Endothelial cell of umbilical vein (primary cell): ENCODE measurements at regions of chr2 and their contacts with region 1.

Region 1: GRCh38 chr2:100818606-100819369 is 1.2 kb upstream of the NPAS2 start:
- DNase-seq: peak; percentile 90
- H3K4me3 ChIP-seq: peak overlapping the region; percentile 61 to 87 (median 63)
- H3K27ac ChIP-seq: peak overlapping the region; percentile 85
- H3K4me1 ChIP-seq: peaks cover 49% of the 10 kb centered on the region
- H3K27me3 ChIP-seq: no peaks in the 10 kb centered on the region
- CTCF ChIP-seq: peak; percentile 44 to 51
- POLR2A ChIP-seq: no peak

Region 2: DNA sequence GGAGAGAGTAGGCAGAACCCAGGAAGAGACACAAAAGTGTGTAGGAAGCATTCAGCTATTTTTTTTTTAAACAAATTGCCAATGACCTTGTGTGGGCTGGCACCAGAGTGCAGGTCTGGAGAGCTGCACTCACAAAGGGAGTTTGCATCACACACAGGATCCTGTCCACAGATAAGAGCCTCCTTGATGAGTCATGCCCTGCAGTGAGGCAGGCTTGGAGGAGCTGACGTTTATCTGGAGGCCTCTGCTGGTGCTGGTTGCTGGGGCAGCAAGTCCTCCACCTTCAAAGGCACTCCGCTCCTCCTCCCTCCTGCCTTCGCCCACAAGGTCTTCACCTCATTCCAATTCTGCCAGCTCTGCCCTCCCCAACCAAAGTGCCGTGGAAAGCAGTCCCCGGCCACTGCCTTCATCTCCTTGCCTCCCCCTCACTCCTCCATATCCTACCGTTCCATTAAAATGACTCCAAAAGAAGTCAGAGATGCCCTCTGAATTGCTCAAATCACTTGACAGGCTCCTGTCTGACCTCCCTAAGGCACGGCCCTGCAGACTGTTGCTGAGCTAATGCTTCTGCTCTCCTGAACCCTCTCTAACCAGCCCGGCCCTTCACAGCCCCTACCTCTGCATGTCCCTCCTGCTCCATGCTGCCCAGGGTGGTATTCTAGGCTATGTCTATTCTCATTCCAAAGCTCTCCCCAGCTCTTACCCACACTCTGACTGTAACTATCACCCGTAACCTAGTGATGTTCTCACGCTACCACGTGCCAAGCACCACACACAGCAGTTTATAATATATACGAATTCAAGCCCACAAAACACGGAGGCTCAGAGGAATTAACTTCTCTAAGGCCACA is 527.4 kb before region 1 on chr2:
- CTCF ChIA-PET with region 1: no interaction called
- POLR2A ChIA-PET with region 1: no interaction called
- dilution Hi-C with region 1: no loop called
- intact Hi-C with region 1: no loop called
- DNase-seq: peak; percentile 77
- H3K4me3 ChIP-seq: no peak overlapping the region
- H3K27ac ChIP-seq: no peak overlapping the region
- H3K4me1 ChIP-seq: peaks cover 6% of the 10 kb centered on the region
- H3K27me3 ChIP-seq: peaks cover 4 to 7% of the 10 kb centered on the region in 2 experiments
- CTCF ChIP-seq: no peak
- POLR2A ChIP-seq: no peak

Region 3: GRCh38 chr2:100767224-100767653 is 51.5 kb before region 1 on chr2:
- CTCF ChIA-PET with region 1: interaction called, 7 read pairs
- POLR2A ChIA-PET with region 1: no interaction called
- dilution Hi-C with region 1: no loop called
- intact Hi-C with region 1: loop called (anchors 2 kb)
- DNase-seq: peak; percentile 86
- H3K4me3 ChIP-seq: no peak overlapping the region
- H3K27ac ChIP-seq: peak overlapping the region; percentile 63
- H3K4me1 ChIP-seq: peaks cover 25% of the 10 kb centered on the region
- H3K27me3 ChIP-seq: no peaks in the 10 kb centered on the region
- CTCF ChIP-seq: no peak
- POLR2A ChIP-seq: no peak

Region 4: GRCh38 chr2:100878000-100878791 is 59.4 kb after region 1 on chr2:
- CTCF ChIA-PET with region 1: interaction called, 7 read pairs
- POLR2A ChIA-PET with region 1: no interaction called
- dilution Hi-C with region 1: no loop called
- intact Hi-C with region 1: loop called (anchors 1 kb)
- DNase-seq: peak; percentile 32
- H3K4me3 ChIP-seq: no peak overlapping the region
- H3K27ac ChIP-seq: peak overlapping the region; percentile 90
- H3K4me1 ChIP-seq: peaks cover 69% of the 10 kb centered on the region
- H3K27me3 ChIP-seq: no peaks in the 10 kb centered on the region
- CTCF ChIP-seq: no peak
- POLR2A ChIP-seq: no peak

Region 5: GRCh38 chr2:100924520-100925451 is 106.0 kb after region 1 on chr2:
- CTCF ChIA-PET with region 1: interaction called, 4 read pairs
- POLR2A ChIA-PET with region 1: interaction called, 4 read pairs
- dilution Hi-C with region 1: no loop called
- intact Hi-C with region 1: loop called (anchors 1 kb)
- DNase-seq: peak; percentile 99
- H3K4me3 ChIP-seq: peak overlapping the region in 2 of 3 experiments; percentile 11 to 29
- H3K27ac ChIP-seq: peak overlapping the region; percentile 96
- H3K4me1 ChIP-seq: peaks cover 28% of the 10 kb centered on the region
- H3K27me3 ChIP-seq: no peaks in the 10 kb centered on the region
- CTCF ChIP-seq: no peak
- POLR2A ChIP-seq: peak; percentile 7